Gastrocnemius medialis (tissue), 4 donors: ENCODE measurements at regions of chr17 and their contacts with region 1.

Region 1: DNA sequence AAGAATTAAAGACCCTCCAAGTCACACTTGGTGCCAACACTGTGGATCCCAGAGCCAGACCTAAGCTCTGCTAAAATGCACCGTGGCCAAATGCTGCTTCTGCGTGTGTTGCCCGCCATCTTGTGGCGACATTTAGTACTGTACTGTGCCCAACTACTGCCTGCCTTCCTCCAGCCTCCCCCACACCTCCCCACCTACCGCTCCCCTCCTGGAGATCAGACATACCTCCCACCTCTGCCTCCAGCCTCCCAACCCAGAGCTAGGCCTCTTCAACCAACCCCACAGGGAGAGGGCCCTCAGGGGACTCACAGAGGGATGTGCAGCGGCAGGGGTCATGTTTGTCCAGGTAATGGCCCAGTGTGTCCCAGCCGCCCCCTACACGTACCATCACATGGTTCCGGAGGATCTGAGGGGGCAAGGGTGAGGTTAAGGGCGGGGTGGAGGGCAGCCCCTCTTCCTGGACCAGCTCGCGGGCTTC is 5.5 kb downstream of the GAS2L2 start:
- DNase-seq: peak; percentile 52 to 66
- ATAC-seq: peak; percentile 81 to 89
- H3K4me3 ChIP-seq: no peak overlapping the region
- H3K27ac ChIP-seq: no peak overlapping the region
- H3K4me1 ChIP-seq: peaks cover 11% of the 10 kb centered on the region in 2 donors
- H3K27me3 ChIP-seq: peaks cover 12 to 23% (median 14%) of the 10 kb centered on the region in 3 donors
- CTCF ChIP-seq: peak; percentile 88 to 94 (median 92)
- POLR2A ChIP-seq: no peak

Region 2: GRCh38 chr17:35170968-35171771 is 576.4 kb before region 1 on chr17:
- in situ Hi-C with region 1: loop called in 1 of 4 experiments (anchors 25 kb)
- intact Hi-C with region 1: no loop called
- DNase-seq: no peak
- ATAC-seq: no peak
- H3K4me3 ChIP-seq: no peak overlapping the region
- H3K27ac ChIP-seq: no peak overlapping the region
- H3K4me1 ChIP-seq: no peaks in the 10 kb centered on the region
- H3K27me3 ChIP-seq: no peaks in the 10 kb centered on the region
- CTCF ChIP-seq: peak in 3 of 5 experiments; percentile 3 to 26 (median 19)
- POLR2A ChIP-seq: no peak

Region 3: DNA sequence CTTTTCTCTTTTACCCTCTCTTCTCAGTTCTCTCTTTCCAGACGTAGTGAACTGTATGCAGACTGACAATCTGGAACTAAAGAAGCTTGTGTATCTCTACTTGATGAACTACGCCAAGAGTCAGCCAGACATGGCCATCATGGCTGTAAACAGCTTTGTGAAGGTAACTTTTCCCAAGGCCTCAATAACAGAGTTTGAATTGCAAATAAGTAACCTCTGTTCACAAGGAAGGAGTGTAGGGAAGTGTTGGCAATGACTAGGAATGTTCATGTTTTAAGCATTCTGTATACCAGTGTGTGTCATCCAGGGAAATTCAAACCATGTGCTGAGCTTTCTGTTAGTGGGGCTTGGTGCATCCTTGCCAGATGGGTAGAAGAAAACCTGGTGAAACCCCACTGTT is 141.9 kb before region 1 on chr17:
- in situ Hi-C with region 1: loop called (anchors 5 to 10 kb)
- intact Hi-C with region 1: no loop called
- DNase-seq: no peak
- ATAC-seq: no peak
- H3K4me3 ChIP-seq: no peak overlapping the region
- H3K27ac ChIP-seq: no peak overlapping the region
- H3K4me1 ChIP-seq: no peaks in the 10 kb centered on the region
- H3K27me3 ChIP-seq: no peaks in the 10 kb centered on the region
- CTCF ChIP-seq: no peak
- POLR2A ChIP-seq: no peak

Region 4: GRCh38 chr17:35660902-35661301 is 86.7 kb before region 1 on chr17:
- in situ Hi-C with region 1: loop called in 1 of 4 experiments (anchors 10 kb)
- intact Hi-C with region 1: loop called (anchors 1 kb)
- DNase-seq: peak in 1 of 2 donors; percentile 2
- ATAC-seq: peak; percentile 88 to 96
- H3K4me3 ChIP-seq: no peak overlapping the region
- H3K27ac ChIP-seq: peak overlapping the region; percentile 26 to 58 (median 46)
- H3K4me1 ChIP-seq: peaks cover 28 to 31% of the 10 kb centered on the region in 2 donors
- H3K27me3 ChIP-seq: no peaks in the 10 kb centered on the region
- CTCF ChIP-seq: peak in 3 of 5 experiments; percentile 34 to 42 (median 36)
- POLR2A ChIP-seq: no peak

Region 5: DNA sequence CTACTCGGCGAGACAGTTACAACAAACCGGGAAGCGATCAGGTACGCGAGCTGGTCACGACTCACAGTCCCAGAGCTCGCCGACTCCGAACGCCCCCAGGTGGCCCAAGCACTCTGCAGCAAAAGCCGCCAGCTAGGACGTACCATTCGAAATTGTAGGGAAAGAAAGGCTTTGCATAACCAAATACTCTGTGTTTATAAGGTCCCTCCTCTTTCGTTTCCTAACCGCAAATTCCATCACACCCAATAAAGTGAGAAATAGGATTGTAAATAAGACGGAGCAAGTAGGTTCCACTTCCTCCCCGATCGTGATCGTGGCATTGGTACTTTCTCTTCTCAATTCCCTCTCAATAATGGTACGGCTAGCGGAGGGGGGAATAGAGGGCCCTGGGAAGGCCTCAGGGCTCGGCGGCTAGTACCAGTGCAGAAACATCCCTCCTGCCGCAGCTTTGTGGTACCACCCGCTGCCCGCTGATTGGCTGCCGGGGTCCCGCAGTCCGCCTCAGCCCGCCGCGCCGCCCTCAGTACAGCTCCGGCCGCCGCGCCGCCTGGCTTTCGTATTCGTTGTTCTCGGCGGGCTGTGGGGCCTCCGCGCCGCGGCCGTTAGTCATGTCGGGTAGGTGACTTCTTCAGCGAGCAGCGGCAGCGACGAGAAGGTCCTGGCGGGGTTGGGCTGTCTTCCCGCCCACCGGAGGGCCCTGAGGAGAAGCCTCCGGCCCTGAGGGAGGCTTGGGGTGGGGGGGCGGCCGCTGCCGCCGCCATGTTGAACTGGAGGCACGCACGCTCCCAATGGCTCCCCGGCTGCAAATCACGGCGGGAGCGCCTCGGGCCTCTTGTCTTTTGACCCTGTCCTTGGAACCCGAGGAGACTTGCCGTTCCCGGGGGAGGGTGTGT is 61.6 kb after region 1 on chr17 and contains the start of gene TAF15:
- in situ Hi-C with region 1: loop called in 1 of 4 experiments (anchors 10 kb)
- intact Hi-C with region 1: no loop called
- DNase-seq: peak; percentile 97
- ATAC-seq: peak; percentile 97
- H3K4me3 ChIP-seq: peak within 1 kb of the TSS; percentile 75 to 98 (median 88)
- H3K27ac ChIP-seq: peak within 1 kb of the TSS; percentile 90 to 99 (median 94)
- H3K4me1 ChIP-seq: peaks cover 21 to 35% of the 10 kb centered on the region in 2 donors
- H3K27me3 ChIP-seq: no peaks in the 10 kb centered on the region
- CTCF ChIP-seq: peak; percentile 50 to 84 (median 83)
- POLR2A ChIP-seq: peak; percentile 99 to 100
- total RNA-seq, gene TAF15: 25.2 to 39.5 (median 31.6) TPM